RWPE1 (cell line): ENCODE measurements at regions of chr2 and their contacts with region 1.

Region 1: GRCh38 chr2:240021488-240022104 is 3.5 kb downstream of the NDUFA10 start:
- DNase-seq: peak; percentile 67
- H3K27ac ChIP-seq: no peak overlapping the region
- CTCF ChIP-seq: peak; percentile 84

Region 2: DNA sequence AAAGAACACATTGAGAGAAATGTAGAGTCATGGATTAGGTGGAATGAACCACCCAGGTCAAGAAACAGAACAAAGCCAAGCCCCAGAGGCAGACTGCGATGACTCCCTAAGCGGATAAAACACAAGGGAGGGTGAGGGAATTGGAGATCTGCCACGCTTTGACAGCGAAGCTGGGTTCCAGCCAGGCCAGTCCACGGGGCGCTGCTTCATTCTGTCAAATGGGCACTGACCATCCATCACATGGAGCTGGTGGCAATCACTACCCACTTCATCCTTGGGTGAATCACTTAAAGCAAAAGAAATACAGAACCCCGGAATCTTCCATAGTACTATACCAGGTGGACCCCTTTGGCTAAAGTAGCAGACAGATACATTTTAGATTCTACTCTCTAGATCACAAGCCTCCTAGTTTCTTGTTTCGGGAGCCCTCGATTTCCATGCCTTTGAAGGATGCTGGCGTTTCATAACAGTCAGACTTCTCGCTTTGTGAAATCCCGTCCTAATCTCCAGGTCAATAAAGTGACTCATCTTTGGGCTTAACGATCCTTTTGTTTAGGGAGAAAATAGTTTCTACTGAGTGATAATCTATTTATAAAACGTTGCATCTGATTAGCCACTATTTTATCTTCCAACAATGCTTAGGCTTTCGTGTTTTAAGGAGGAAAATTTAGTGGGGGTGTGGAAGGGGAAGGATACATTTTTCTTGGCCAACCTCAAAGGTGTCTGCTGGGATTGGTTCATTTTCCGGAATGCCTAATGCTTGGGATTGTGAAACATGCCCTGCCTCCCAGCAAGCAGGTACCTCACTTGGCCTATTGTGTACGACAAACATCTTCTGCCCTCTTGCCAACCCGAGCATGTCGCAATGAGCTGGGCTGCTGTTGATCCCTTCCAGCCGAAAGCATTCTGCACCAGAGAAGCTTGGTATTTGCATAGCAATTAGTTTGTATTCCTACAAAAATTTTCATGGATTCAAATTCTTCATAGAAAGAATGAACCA is 576.7 kb before region 1 on chr2:
- CTCF ChIA-PET with region 1: no interaction called
- POLR2A ChIA-PET with region 1: interaction called, 10 read pairs
- DNase-seq: peak; percentile 79
- H3K27ac ChIP-seq: peak overlapping the region; percentile 87
- CTCF ChIP-seq: no peak

Region 3: GRCh38 chr2:240051697-240052096 is 30.1 kb after region 1 on chr2:
- CTCF ChIA-PET with region 1: no interaction called
- POLR2A ChIA-PET with region 1: no interaction called
- DNase-seq: no peak
- H3K27ac ChIP-seq: no peak overlapping the region
- CTCF ChIP-seq: no peak

Region 4: GRCh38 chr2:240131931-240132650 is 110.5 kb after region 1 on chr2:
- CTCF ChIA-PET with region 1: no interaction called
- POLR2A ChIA-PET with region 1: no interaction called
- DNase-seq: no peak
- H3K27ac ChIP-seq: no peak overlapping the region
- CTCF ChIP-seq: no peak